PC-9 (cell line): ENCODE measurements at regions of chr12 and their contacts with region 1.

Region 1: GRCh38 chr12:10140001-10140400 is 10.0 kb upstream of the CLEC7A start:
- DNase-seq: peak; percentile 41 to 56
- H3K4me3 ChIP-seq: no peak overlapping the region
- H3K27ac ChIP-seq: no peak overlapping the region
- H3K4me1 ChIP-seq: no peaks in the 10 kb centered on the region
- H3K27me3 ChIP-seq: no peaks in the 10 kb centered on the region
- CTCF ChIP-seq: peak; percentile 82

Region 2: GRCh38 chr12:9331218-9331626 is 808.8 kb before region 1 on chr12:
- CTCF ChIA-PET with region 1: no interaction called
- POLR2A ChIA-PET with region 1: no interaction called
- intact Hi-C with region 1: loop called (anchors 2 kb)
- DNase-seq: peak in 1 of 2 experiments; percentile 65
- H3K4me3 ChIP-seq: no peak overlapping the region
- H3K27ac ChIP-seq: no peak overlapping the region
- H3K4me1 ChIP-seq: no peaks in the 10 kb centered on the region
- H3K27me3 ChIP-seq: no peaks in the 10 kb centered on the region
- CTCF ChIP-seq: peak; percentile 96

Region 3: GRCh38 chr12:9721394-9722092 is 418.5 kb before region 1 on chr12:
- CTCF ChIA-PET with region 1: interaction called, 3 read pairs
- POLR2A ChIA-PET with region 1: interaction called, 27 read pairs
- intact Hi-C with region 1: no loop called
- DNase-seq: peak in 1 of 2 experiments; percentile 90
- H3K4me3 ChIP-seq: no peak overlapping the region
- H3K27ac ChIP-seq: peak overlapping the region; percentile 69
- H3K4me1 ChIP-seq: peaks cover 25% of the 10 kb centered on the region
- H3K27me3 ChIP-seq: no peaks in the 10 kb centered on the region
- CTCF ChIP-seq: no peak

Region 4: DNA sequence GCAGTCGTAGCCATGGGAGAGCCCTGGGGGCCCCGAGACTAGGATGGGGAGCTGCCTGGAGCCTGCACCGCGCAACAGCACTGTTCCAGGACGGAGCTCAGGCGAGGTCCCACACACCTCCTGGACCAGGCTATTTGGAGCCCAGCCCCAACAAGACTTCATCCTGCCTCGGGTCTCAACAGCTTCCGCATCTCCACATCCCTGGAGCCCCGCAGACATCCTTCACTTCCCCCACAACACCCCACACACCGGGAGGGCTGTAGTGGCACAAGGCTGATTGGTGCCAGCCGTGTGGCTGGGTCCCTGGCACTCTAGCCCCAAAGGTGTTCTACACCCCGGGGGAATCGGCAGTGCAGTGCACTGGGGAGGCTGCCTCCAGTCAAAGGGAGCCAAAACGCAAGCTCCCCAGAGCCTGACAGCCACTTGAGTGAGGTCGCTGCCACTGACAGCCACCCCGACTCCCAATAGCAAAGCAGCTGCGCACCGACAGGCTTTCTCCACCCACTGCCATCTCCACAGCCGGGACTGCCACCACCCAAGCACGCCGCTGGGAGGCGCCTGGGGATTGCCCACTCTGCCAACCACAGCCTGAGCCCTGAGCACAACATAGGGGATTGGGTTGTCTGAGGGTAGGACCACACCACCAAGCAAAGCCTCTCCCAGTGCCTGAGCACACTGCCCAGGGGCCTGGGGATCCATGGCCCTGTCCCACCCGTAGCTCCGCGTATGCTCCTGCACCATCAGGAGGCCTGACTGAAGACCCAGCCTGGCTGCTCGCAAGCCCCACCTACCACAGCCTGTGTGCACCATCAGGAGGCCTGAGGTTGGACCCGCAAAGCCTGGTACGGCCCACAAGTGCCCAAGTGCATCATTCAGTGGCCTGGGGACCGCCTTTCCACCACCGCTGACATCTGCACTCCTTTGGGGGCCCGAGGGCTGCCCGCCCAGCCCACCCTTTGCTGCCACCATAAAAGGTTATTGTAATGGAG is 325.9 kb before region 1 on chr12:
- CTCF ChIA-PET with region 1: interaction called, 4 read pairs
- POLR2A ChIA-PET with region 1: interaction called, 4 read pairs
- intact Hi-C with region 1: loop called (anchors 1 kb)
- DNase-seq: peak; percentile 35 to 83
- H3K4me3 ChIP-seq: 0 out of 2 replicates have a peak overlapping the region, but pooled peaks have one; percentile 33
- H3K27ac ChIP-seq: no peak overlapping the region
- H3K4me1 ChIP-seq: no peaks in the 10 kb centered on the region
- H3K27me3 ChIP-seq: no peaks in the 10 kb centered on the region
- CTCF ChIP-seq: peak; percentile 83

Region 5: GRCh38 chr12:9940375-9940774 is 199.6 kb before region 1 on chr12:
- CTCF ChIA-PET with region 1: no interaction called
- POLR2A ChIA-PET with region 1: no interaction called
- intact Hi-C with region 1: loop called (anchors 5 kb)
- DNase-seq: no peak
- H3K4me3 ChIP-seq: no peak overlapping the region
- H3K27ac ChIP-seq: no peak overlapping the region
- H3K4me1 ChIP-seq: no peaks in the 10 kb centered on the region
- H3K27me3 ChIP-seq: no peaks in the 10 kb centered on the region
- CTCF ChIP-seq: peak; percentile 30; the same call in 1 of the 2 replicates